Left cardiac atrium (tissue), 4 donors: ENCODE measurements at regions of chr7 and their contacts with region 1.

Region 1: GRCh38 chr7:156473476-156474240 is 166.9 kb upstream of the RNF32 start:
- DNase-seq: peak; percentile 43
- ATAC-seq: peak; percentile 38 to 44

Region 2: DNA sequence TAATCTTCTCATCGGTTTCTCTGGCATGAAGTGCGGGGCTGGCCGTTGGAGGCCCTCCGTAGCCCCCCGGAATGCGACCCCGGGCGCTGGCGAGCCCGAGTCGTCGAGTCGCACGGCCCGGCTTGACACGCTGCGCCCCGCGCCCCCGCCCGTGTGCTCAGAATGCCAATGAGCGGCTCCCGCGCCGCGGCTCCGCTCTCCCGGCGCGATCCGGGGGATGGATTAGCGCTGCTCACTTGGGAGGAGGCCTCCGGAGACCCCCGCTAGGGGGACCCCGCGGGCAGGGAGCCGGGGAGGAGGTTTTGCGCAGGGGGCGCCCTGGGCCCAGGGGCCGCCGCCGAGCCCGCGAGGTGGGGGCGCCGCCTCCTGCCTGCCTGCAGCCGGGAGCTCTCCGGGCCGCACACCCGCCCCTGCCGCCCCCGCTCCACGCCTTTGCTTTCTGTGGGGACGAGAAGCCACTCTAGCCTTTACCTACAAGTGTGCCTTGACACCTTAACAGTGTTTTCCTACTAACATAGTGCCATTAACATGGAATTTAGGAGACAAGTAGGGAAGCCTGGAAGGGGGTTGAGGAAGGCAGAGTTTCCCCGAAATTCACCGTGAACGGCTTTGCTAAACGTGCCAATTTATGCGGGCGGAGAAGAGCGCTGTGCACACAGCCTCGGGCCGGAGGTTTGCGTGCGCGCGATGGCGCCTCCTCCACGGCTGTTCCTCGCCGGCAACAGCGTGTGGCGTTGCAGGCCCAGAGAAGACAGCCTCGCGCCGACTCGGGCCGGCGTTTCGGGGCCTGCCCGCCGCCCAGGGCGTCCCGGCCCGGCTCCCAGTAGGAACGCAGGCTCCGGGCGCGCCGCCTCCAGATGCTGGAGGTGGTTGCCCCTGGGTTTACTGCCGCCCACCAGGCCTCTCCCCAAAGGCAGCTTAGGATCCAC is 668.5 kb before region 1 on chr7:
- intact Hi-C with region 1: loop called (anchors 5 to 10 kb)
- DNase-seq: peak; percentile 46
- ATAC-seq: peak; percentile 73 to 85

Region 3: DNA sequence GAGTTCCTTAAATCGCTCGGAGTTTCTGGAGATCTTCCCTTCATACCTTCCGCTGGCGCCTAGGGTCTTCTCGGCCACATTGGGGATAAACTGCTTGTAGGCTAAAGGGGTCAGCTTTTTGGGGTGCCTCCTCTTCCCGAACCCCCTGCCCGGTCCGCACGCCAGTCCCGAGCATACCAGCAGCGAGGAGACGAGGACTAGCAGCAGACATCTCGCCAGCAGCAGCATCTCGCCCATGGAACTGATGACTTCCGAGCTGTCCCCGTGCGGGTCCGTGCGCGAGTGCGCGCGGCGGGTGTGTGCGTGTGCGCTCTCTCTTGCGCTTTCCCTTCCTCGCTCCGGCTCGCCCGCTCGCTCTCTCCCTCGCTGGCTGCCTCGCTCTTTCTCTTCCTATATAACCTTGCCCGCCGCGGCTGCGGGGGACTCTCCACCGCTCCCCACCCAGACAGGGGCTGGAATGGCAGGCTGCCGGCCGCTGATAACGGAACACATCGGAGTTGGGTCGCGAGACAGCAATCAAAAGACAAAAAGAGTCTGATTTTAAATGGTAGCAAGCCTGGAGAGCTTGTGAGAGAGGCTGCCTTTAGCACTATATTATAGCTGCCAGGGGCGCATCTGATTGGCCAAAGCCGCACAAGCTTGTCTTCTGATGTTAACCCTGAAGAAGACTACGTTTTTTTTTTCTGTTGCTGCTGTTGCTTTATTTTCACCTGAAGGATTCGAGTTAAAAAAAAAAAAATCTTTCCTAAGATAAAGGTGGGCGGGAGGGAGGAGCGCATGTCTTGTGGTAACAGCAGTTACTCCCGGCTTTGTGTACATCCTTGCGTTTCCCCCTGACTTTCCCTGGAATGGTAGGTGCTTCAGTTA is 661.5 kb before region 1 on chr7 and contains the start of gene SHH:
- intact Hi-C with region 1: loop called (anchors 5 to 10 kb)
- DNase-seq: no peak
- ATAC-seq: no peak
- total RNA-seq, gene SHH: not detected

Region 4: DNA sequence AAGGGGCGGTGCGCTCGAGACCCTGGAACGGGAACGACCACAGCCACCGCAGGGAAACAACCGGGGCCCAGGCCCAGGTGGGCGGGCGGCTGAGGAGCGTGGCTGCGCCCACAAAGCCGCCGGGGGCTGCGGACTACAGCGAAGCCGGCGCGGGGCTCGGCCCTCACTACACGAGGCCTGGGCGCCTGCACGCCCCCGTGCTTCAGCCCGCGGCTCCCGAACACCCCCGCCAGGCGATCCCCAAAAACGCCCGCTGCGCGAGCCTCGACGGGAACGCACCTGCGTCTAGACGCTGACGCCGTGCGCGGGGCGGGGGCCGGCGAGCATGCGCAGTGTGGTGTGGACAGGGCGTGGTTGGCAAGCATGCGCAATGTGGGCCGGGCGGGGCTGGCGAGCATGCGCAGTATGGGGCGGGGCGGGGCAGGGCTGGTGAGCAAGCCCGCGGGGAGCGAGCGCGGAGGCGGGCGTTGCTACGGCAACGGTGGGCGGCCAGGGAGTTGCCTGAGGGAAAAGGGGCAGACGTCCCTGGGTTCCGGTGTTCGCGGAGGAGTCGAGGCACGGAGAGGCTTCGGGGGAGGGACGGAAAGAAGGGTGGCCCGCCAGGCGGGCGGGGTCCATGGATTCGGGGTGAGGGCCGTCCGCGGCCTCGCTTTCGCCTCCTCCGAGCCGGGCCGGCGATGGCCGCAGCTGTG is 166.7 kb after region 1 on chr7 and contains the start of gene RNF32:
- intact Hi-C with region 1: no loop called
- DNase-seq: peak; percentile 95
- ATAC-seq: peak; percentile 98 to 99
- total RNA-seq, gene RNF32: 0.56 to 0.76 TPM